ENCODE measurements at regions of chr3 and their contacts with region 1.

Region 1: DNA sequence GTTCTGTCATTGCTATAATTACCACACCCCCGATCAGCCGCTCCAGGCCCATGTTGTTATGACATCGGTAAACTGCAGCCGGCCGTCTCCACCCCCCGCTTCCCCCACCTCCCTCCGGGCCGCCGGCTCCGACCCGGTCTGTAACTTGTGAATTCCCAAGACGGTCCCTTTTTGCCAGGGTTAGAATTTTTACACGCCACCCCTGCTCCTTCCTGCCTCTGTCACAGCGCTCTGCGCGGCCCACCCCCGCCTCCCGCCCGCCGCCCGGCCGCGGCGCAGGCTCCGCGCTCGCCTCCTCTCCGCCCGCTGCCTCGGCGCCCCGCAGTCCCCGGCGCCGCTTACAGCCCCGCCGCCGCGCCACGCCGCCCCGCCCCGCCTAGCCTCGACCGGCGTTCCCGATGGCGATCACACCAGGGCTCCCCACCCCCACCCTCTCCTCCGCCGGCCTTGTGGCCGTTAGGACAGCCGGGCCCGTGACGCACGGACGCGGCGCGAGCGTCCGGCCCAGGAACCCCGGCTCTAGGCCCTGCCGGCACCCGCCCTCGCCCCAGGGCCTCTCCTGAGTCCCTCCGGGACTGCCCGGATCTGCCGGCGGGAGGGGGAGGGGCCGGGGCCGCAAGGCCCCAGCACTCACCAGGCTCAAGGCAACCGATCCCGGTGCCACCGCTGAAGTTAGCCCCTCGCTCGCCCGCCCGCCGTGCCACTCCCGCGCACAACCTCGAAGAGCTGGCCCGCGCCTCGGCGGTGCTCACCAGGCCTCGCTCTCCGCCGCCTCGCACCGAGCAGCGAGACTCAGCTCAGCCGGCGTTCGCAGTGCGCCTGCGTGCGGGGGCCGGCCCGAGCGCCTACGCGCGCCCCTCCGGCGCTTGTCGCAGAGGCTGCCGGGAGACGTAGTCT is at the start of gene KPNA1:
- DNase-seq: peak; percentile 83
- ATAC-seq: peak; percentile 93
- H3K4me3 ChIP-seq: peak within 1 kb of the TSS; percentile 88
- H3K27ac ChIP-seq: peak within 1 kb of the TSS; percentile 91
- H3K4me1 ChIP-seq: 0 out of 2 replicates have a peak, but pooled peaks cover 3% of the 10 kb centered on the region
- H3K27me3 ChIP-seq: no peaks in the 10 kb centered on the region
- CTCF ChIP-seq: no peak
- POLR2A ChIP-seq: peak; percentile 92
- RAD21 ChIP-seq: no peak
- total RNA-seq, gene KPNA1: 53.3 and 112 TPM in 2 replicates

Region 2: DNA sequence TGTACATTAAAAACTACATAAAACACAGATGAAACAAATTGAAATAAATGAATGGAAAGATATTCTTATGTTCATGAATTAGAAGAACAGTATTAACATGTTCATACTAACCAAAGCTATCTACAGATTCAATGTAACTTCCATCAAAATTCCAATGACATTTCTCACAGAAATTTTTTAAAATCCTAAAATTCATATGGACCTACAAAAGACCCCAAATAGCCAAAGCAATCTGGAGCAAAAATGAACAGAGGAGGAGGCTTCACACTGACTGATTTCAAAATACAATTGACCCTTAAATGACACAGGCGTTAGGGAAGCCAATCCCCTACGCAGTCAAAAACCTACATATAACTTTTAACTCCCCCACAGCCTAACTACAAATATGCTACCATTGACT is 39.1 kb before region 1 on chr3:
- CTCF ChIA-PET with region 1: no interaction called
- POLR2A ChIA-PET with region 1: no interaction called
- dilution Hi-C with region 1: no loop called
- in situ Hi-C with region 1: no loop called
- intact Hi-C with region 1: loop called (anchors 5 kb)
- DNase-seq: no peak
- ATAC-seq: no peak
- H3K4me3 ChIP-seq: no peak overlapping the region
- H3K27ac ChIP-seq: no peak overlapping the region
- H3K4me1 ChIP-seq: no peaks in the 10 kb centered on the region
- H3K27me3 ChIP-seq: no peaks in the 10 kb centered on the region
- CTCF ChIP-seq: no peak
- POLR2A ChIP-seq: no peak
- RAD21 ChIP-seq: no peak

Region 3: GRCh38 chr3:122621112-122621511 is 106.7 kb after region 1 on chr3:
- CTCF ChIA-PET with region 1: no interaction called
- POLR2A ChIA-PET with region 1: no interaction called
- dilution Hi-C with region 1: no loop called
- in situ Hi-C with region 1: no loop called
- intact Hi-C with region 1: no loop called
- DNase-seq: no peak
- ATAC-seq: no peak
- H3K4me3 ChIP-seq: no peak overlapping the region
- H3K27ac ChIP-seq: no peak overlapping the region
- H3K4me1 ChIP-seq: peaks cover 2% of the 10 kb centered on the region; the same call in 1 of the 2 replicates
- H3K27me3 ChIP-seq: peaks cover 39% of the 10 kb centered on the region
- CTCF ChIP-seq: no peak
- POLR2A ChIP-seq: no peak
- RAD21 ChIP-seq: no peak